ENCODE measurements at regions of chr20 and their contacts with region 1.

Region 1: GRCh38 chr20:13302647-13303450 is 81.8 kb downstream of the ISM1 start:
- DNase-seq: peak; percentile 21
- H3K4me3 ChIP-seq: no peak overlapping the region
- H3K27ac ChIP-seq: no peak overlapping the region
- H3K4me1 ChIP-seq: no peaks in the 10 kb centered on the region
- H3K27me3 ChIP-seq: peaks cover 3 to 4% of the 10 kb centered on the region in 2 experiments
- CTCF ChIP-seq: peak; percentile 75 to 81
- POLR2A ChIP-seq: no peak

Region 2: DNA sequence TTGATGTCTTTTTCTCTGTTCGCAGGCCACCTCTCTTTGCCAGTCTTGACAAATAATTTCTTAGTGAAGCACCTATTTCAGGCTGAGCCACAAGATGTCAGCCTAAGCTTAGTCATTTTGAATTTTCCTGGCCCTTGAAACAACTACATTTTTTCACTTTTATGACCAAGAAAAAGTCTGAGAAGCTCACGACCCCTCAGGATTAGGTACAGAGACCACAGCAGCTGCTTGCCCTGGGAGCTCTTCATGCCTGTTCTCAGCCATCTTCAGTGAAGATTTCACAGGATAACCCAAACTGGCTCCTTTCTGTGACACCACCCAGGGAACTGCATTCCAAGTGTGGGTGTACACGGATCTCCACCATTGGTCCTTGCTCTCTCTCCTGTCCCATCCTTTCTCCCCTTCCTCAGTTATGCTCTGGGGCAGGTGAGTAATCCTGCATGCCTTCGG is 332.5 kb before region 1 on chr20:
- CTCF ChIA-PET with region 1: interaction called, 7 read pairs
- POLR2A ChIA-PET with region 1: no interaction called
- dilution Hi-C with region 1: no loop called
- intact Hi-C with region 1: loop called (anchors 2 kb)
- DNase-seq: peak; percentile 56
- H3K4me3 ChIP-seq: no peak overlapping the region
- H3K27ac ChIP-seq: no peak overlapping the region
- H3K4me1 ChIP-seq: no peaks in the 10 kb centered on the region
- H3K27me3 ChIP-seq: peaks cover 0 to 6% of the 10 kb centered on the region in 2 experiments
- CTCF ChIP-seq: peak; percentile 27 to 42
- POLR2A ChIP-seq: no peak

Region 3: GRCh38 chr20:13119583-13119982 is 183.3 kb before region 1 on chr20:
- CTCF ChIA-PET with region 1: interaction called, 39 read pairs
- POLR2A ChIA-PET with region 1: no interaction called
- dilution Hi-C with region 1: no loop called
- intact Hi-C with region 1: loop called (anchors 1 kb)
- DNase-seq: peak; percentile 64
- H3K4me3 ChIP-seq: no peak overlapping the region
- H3K27ac ChIP-seq: no peak overlapping the region
- H3K4me1 ChIP-seq: no peaks in the 10 kb centered on the region
- H3K27me3 ChIP-seq: no peaks in the 10 kb centered on the region
- CTCF ChIP-seq: peak; percentile 68 to 76
- POLR2A ChIP-seq: no peak

Region 4: DNA sequence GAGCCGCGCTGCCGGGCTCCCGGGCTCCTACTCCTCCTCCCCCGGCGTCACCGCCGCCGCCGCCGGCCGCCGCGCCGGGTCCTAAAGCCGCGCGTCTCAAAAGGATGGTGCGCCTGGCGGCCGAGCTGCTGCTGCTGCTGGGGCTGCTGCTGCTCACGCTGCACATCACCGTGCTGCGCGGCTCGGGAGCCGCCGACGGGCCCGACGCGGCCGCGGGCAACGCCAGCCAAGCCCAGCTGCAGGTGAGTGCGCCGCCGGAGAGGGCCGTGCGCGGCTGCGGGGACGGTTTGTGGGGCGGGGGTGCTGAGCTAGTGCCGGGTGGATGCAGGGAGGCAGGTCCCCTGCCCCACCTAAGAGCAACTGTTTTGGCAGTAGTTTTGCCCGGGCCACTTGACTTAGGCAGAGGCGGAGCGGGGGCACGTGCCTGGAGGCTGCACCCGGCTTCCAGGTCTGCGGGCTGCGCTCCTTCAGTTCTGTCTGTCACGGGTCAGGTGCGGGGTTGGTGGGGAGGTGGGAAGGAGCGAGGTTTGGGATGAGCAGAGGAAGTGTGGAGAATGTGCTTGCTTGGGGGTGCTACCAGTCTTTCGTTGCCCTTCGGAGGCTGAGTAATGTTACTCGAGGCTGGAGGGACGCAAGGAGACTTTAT is 81.1 kb before region 1 on chr20:
- CTCF ChIA-PET with region 1: interaction called, 7 read pairs
- POLR2A ChIA-PET with region 1: no interaction called
- dilution Hi-C with region 1: no loop called
- intact Hi-C with region 1: loop called (anchors 1 kb)
- DNase-seq: peak; percentile 32
- H3K4me3 ChIP-seq: peak overlapping the region in 1 of 3 experiments; percentile 24
- H3K27ac ChIP-seq: no peak overlapping the region
- H3K4me1 ChIP-seq: no peaks in the 10 kb centered on the region
- H3K27me3 ChIP-seq: peaks cover 46 to 78% of the 10 kb centered on the region in 2 experiments
- CTCF ChIP-seq: peak in 1 of 2 donors; percentile 10
- POLR2A ChIP-seq: no peak

Region 5: DNA sequence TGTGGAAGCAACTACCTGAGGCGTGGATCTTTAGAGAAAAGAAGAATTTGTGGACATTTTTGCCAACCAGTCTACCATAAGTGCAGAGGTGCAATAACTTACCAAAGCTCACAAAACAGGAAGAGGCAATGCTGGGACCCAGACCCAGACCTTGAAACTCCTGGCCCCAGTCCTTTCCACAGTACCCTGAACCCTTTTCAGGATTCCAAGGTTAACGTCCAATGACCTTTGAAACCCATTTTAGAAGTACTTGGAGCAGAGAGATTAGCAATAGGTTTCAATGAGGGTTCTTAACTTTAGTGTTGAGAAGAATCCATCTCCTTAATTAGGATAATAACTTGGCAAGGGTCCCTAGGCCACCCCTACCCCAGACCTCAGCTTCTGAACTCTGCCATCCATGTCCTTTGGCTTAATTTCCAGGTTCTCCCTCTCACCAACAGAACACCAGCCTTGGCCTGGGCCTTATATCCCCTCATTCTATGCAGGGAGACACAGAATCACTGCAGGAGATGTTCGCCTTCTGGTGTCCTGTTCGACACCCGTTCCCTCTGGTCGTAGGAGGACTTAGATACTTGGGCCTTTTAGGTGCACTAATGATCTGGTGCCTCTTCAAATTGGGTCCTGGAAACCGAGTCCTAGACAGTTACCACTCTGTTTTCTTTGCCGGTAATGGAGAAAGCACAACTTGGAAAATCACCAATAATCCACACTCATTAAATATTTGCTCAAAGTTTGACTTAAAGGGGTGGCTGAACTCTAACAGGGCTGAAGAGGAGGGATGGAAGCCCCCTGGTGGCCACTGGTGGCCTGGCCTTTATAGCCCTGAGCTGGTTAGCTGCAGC is 41.2 kb before region 1 on chr20:
- CTCF ChIA-PET with region 1: interaction called, 10 read pairs
- POLR2A ChIA-PET with region 1: no interaction called
- dilution Hi-C with region 1: no loop called
- intact Hi-C with region 1: loop called (anchors 2 kb)
- DNase-seq: peak; percentile 49
- H3K4me3 ChIP-seq: no peak overlapping the region
- H3K27ac ChIP-seq: no peak overlapping the region
- H3K4me1 ChIP-seq: peaks cover 12% of the 10 kb centered on the region
- H3K27me3 ChIP-seq: peaks cover 0 to 2% of the 10 kb centered on the region in 2 experiments
- CTCF ChIP-seq: peak; percentile 88 to 92
- POLR2A ChIP-seq: no peak

Region 6: GRCh38 chr20:13292201-13292885 is 10.5 kb before region 1 on chr20:
- CTCF ChIA-PET with region 1: interaction called, 14 read pairs
- POLR2A ChIA-PET with region 1: no interaction called
- dilution Hi-C with region 1: no loop called
- intact Hi-C with region 1: no loop called
- DNase-seq: no peak
- H3K4me3 ChIP-seq: no peak overlapping the region
- H3K27ac ChIP-seq: no peak overlapping the region
- H3K4me1 ChIP-seq: no peaks in the 10 kb centered on the region
- H3K27me3 ChIP-seq: peaks cover 0 to 2% of the 10 kb centered on the region in 2 experiments
- CTCF ChIP-seq: no peak
- POLR2A ChIP-seq: no peak

Measured in endothelial cell of umbilical vein (primary cell).